Calu3 (cell line): ENCODE measurements at regions of chr5 and their contacts with region 1.

Region 1: GRCh38 chr5:98773464-98774191 is at the start of gene RGMB:
- DNase-seq: peak; percentile 99
- H3K4me3 Mint-ChIP-seq: peak within 1 kb of the TSS; percentile 82
- H3K27ac Mint-ChIP-seq: peak within 1 kb of the TSS; percentile 70
- H3K4me1 Mint-ChIP-seq: peaks cover 47% of the 10 kb centered on the region
- H3K27me3 Mint-ChIP-seq: no peaks in the 10 kb centered on the region
- CTCF ChIP-seq: no peak
- total RNA-seq, gene RGMB: 34.5 and 35.8 TPM in 2 replicates

Region 2: DNA sequence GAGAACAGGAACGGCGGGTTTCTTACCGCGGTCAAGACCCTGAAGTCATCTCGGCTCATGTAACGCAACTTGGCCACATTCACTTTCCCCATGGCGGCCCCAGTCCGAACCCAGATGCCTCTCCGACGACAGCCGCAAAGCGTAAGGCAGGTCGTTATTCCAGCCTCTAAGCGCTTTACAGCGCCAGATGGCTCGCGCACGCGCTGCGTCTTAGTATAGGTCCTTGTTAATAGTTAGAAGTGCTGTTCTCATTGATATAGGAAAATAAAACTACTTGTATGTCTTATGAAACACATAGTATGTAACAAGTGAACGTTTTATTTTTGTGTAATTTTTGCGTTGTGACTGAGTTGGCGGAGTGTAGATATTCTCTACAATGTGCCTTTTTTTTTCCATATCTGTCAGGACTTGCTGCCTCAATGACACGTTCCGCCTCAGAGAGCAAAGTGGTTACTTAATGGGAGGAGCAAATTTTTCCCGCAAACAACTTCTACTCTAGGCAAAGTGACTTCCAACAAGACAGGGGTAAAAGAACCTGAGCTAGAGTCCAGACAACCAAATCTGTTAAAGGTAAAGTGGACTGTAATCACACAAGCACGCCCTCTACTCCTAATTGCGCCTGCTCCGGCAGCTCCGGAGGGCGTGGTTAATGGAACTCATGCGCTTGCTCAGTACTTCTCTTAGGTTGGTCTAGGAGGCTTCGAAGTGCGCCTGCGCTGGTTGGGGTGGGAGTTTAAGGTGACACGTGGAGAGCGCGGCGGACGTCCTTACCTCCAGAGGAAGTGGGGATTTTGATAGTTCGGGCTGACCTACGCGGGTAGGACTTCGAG is 1590.3 kb before region 1 on chr5 and contains the start of gene RIOK2:
- CTCF ChIA-PET with region 1: no interaction called
- intact Hi-C with region 1: loop called (anchors 2 kb)
- DNase-seq: peak; percentile 95
- H3K4me3 Mint-ChIP-seq: peak within 1 kb of the TSS; percentile 75
- H3K27ac Mint-ChIP-seq: peak within 1 kb of the TSS; percentile 97
- H3K4me1 Mint-ChIP-seq: peaks cover 34% of the 10 kb centered on the region
- H3K27me3 Mint-ChIP-seq: no peaks in the 10 kb centered on the region
- CTCF ChIP-seq: no peak
- total RNA-seq, gene RIOK2: 28.6 and 33.0 TPM in 2 replicates

Region 3: DNA sequence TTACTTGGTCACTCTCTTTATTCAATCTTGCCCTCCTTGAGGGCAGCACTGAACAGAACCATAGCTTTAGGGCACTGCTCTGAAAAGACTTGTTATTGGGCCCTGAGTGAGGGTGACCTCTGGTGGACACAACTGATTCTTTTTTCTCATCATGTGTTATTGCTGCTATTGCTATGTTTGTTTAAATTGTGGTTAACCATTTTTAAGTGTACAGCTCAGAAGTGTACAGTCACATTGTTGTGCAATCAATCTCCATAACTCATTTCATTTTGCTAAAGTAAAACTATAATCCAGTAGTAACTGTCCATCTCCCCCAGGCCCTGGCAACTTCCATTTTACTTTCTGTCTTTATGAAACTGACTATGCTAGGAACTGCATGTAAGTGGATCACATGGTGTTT is 1239.5 kb before region 1 on chr5:
- CTCF ChIA-PET with region 1: interaction called, 9 read pairs
- intact Hi-C with region 1: loop called (anchors 5 kb)
- DNase-seq: peak; percentile 60
- H3K4me3 Mint-ChIP-seq: no peak overlapping the region
- H3K27ac Mint-ChIP-seq: no peak overlapping the region
- H3K4me1 Mint-ChIP-seq: peaks cover 23% of the 10 kb centered on the region
- H3K27me3 Mint-ChIP-seq: no peaks in the 10 kb centered on the region
- CTCF ChIP-seq: peak; percentile 56

Region 4: GRCh38 chr5:98757978-98758377 is 15.7 kb before region 1 on chr5:
- CTCF ChIA-PET with region 1: no interaction called
- intact Hi-C with region 1: no loop called
- DNase-seq: no peak
- H3K4me3 Mint-ChIP-seq: no peak overlapping the region
- H3K27ac Mint-ChIP-seq: no peak overlapping the region
- H3K4me1 Mint-ChIP-seq: peaks cover 9% of the 10 kb centered on the region
- H3K27me3 Mint-ChIP-seq: no peaks in the 10 kb centered on the region
- CTCF ChIP-seq: no peak

Region 5: DNA sequence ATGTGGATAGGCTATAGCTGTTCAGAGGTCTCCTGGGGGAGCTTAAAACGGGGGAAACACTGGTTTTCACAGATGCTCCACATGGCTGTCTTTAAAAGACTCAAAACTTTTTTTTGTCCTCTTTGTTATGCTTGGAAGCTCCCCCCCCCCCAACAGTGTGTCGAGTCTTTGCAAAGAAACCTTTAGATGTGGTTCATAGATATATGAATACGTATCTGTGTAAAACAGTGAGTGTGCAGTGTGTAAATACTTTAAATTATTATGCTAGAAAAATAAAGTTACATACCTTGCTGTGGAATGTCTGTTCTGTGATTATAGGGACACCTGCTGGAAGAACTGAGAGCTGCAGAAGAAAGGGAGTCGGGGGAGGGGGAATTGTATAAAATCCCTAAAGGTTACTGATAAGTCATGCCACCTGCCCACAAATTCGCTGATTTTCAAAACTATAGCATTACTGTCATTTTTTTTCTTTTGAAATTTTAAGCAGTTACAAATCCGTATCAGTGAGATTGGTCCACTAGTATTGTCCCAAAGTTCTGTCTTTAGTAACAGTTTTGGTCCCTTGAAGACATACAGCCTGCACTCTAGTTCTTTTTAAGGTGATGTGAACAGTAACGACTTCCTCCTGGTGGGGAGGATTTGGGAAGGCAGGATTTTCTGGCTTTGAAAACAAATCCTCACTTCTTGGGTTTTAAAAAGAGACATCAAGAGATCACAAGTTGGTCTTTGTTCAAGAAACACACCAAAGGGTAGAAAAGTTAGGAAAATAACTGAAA is 22.8 kb after region 1 on chr5:
- CTCF ChIA-PET with region 1: interaction called, 11 read pairs
- intact Hi-C with region 1: loop called (anchors 2 kb)
- DNase-seq: peak; percentile 70
- H3K4me3 Mint-ChIP-seq: no peak overlapping the region
- H3K27ac Mint-ChIP-seq: no peak overlapping the region
- H3K4me1 Mint-ChIP-seq: peaks cover 7% of the 10 kb centered on the region
- H3K27me3 Mint-ChIP-seq: no peaks in the 10 kb centered on the region
- CTCF ChIP-seq: peak; percentile 81

Region 6: DNA sequence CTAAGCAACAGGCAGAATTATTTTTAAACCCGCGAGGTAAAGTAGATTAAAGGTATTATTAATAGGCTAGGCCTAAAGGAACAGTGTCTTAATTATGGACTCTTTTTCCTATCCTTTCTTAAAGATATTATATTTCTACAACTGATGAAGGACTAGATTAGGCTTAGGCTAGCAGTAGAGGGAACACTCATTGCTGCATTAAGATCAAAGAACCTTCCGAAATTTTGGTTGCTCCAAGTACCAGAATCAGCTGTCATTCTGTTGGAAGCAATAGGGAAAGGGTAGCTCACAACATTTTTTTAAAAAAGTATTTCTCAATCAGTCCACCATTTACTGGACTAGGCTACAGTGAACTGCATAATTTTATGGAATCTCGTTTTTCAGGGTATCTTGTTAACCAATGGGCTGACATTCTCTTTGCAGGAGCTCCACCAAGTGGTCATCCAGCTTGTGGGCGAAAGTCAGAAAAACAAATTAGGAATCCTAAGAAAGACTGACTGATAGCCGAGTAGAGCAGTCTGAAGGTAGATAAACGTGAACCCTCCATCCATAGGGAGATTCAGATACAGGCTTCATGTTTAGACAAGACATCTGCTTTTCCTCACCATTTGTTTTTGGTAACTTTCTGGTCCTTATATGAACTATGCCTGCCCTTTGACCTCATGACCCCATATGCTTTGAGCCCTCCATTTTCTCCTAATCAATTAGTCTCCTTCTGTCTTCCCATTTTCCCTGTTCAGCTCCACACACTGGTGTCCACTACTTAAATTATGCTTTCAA is 258.8 kb after region 1 on chr5:
- CTCF ChIA-PET with region 1: no interaction called
- intact Hi-C with region 1: loop called (anchors 10 kb)
- DNase-seq: peak; percentile 80
- H3K4me3 Mint-ChIP-seq: peak overlapping the region; percentile 62
- H3K27ac Mint-ChIP-seq: peak overlapping the region; percentile 64
- H3K4me1 Mint-ChIP-seq: peaks cover 50% of the 10 kb centered on the region
- H3K27me3 Mint-ChIP-seq: no peaks in the 10 kb centered on the region
- CTCF ChIP-seq: peak; percentile 81